ENCODE measurements at regions of chr3 and their contacts with region 1.

Region 1: GRCh38 chr3:194472290-194472920 is 14.4 kb downstream of the ATP13A3 start:
- DNase-seq: no peak
- H3K4me3 Mint-ChIP-seq: no peak overlapping the region
- H3K27ac Mint-ChIP-seq: no peak overlapping the region
- H3K4me1 Mint-ChIP-seq: peaks cover 14% of the 10 kb centered on the region
- H3K27me3 Mint-ChIP-seq: no peaks in the 10 kb centered on the region

Region 2: GRCh38 chr3:194573691-194574437 is 101.5 kb after region 1 on chr3:
- intact Hi-C with region 1: loop called (anchors 1 kb)
- DNase-seq: no peak
- H3K4me3 Mint-ChIP-seq: no peak overlapping the region
- H3K27ac Mint-ChIP-seq: no peak overlapping the region
- H3K4me1 Mint-ChIP-seq: peaks cover 27% of the 10 kb centered on the region
- H3K27me3 Mint-ChIP-seq: peaks cover 26% of the 10 kb centered on the region

Region 3: GRCh38 chr3:194592798-194593752 is 120.7 kb after region 1 on chr3:
- intact Hi-C with region 1: loop called (anchors 1 kb)
- DNase-seq: no peak
- H3K4me3 Mint-ChIP-seq: no peak overlapping the region
- H3K27ac Mint-ChIP-seq: no peak overlapping the region
- H3K4me1 Mint-ChIP-seq: peaks cover 5% of the 10 kb centered on the region
- H3K27me3 Mint-ChIP-seq: no peaks in the 10 kb centered on the region

Measured in activated T-helper 2 cell treated with anti-CD3 and anti-CD28 coated beads, Interferon-gamma antibody, Interleukin-2, Interleukin-4, amounts not matched to agents 10 μg/mL and 5 μg/mL and 100 μg/mL, durations not matched to agents 14 hours and 24 hours and 36 hours (primary cell).